Dorsolateral prefrontal cortex (tissue), 120 donors: ENCODE measurements at regions of chr15 and their contacts with region 1.

Region 1: GRCh38 chr15:40421246-40422157 is 15.9 kb downstream of the IVD start:
- DNase-seq: peak; percentile 67 to 89 (median 80)
- H3K4me3 ChIP-seq: peak overlapping the region in 21 of 59 donors; percentile 9 to 33 (median 20)
- H3K27ac ChIP-seq: peak overlapping the region in 25 of 59 donors; percentile 0 to 66 (median 33)
- H3K27me3 ChIP-seq: no peaks in the 10 kb centered on the region
- CTCF ChIP-seq: peak; percentile 56 to 99 (median 92)

Region 2: DNA sequence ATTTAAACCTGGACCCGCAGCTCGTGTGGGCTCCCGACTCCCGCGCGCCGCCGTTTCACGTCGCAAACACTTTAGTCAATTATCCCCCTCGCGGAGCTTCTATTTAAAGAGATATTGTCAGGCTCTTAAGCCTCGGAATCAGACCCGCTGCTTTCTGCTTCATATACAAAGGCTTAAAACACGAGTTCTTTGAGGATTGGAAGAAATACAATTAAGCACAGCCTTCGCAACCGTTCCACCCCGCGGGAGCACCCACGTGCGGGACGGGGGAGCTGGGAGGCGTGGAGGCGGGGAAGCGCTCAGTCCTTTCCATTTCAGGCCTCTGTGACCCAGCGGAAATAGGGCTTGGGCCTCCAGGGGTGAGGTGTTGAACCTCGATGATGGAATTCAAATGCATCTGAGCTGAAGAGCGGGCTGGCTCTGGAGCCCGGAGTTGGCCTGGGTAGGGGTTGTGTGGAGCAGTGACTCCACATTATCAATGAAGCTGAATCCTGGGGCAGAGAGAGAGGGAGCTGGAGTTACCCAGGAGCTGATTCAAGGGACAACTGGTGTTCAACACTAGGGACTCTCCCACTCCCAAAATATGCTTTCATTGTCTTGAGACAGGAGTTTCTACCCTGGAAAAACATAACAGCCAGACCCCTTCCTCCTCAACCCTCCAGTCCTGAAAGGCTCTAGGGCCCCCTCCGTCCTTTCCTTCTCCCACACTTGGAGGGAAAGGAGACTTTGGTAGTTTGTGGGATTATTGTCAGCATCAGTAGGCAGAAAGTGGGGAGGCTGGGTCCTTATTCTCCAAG is 141.0 kb before region 1 on chr15:
- intact Hi-C with region 1: loop called (anchors 1 to 5 kb)
- DNase-seq: no peak
- H3K4me3 ChIP-seq: peak overlapping the region in 29 of 59 donors; percentile 3 to 57 (median 38)
- H3K27ac ChIP-seq: no peak overlapping the region
- H3K27me3 ChIP-seq: peaks cover 0 to 57% (median 37%) of the 10 kb centered on the region in 45 donors
- CTCF ChIP-seq: no peak

Region 3: GRCh38 chr15:40344631-40345120 is 76.8 kb before region 1 on chr15:
- intact Hi-C with region 1: loop called (anchors 2 to 5 kb)
- DNase-seq: peak in 6 of 10 donors; percentile 40 to 89 (median 70)
- H3K4me3 ChIP-seq: peak overlapping the region in 3 of 59 donors; percentile 8 to 26 (median 9)
- H3K27ac ChIP-seq: peak overlapping the region in 3 of 59 donors; percentile 15 to 59 (median 45)
- H3K27me3 ChIP-seq: no peaks in the 10 kb centered on the region
- CTCF ChIP-seq: peak; percentile 56 to 90 (median 81)

Region 4: DNA sequence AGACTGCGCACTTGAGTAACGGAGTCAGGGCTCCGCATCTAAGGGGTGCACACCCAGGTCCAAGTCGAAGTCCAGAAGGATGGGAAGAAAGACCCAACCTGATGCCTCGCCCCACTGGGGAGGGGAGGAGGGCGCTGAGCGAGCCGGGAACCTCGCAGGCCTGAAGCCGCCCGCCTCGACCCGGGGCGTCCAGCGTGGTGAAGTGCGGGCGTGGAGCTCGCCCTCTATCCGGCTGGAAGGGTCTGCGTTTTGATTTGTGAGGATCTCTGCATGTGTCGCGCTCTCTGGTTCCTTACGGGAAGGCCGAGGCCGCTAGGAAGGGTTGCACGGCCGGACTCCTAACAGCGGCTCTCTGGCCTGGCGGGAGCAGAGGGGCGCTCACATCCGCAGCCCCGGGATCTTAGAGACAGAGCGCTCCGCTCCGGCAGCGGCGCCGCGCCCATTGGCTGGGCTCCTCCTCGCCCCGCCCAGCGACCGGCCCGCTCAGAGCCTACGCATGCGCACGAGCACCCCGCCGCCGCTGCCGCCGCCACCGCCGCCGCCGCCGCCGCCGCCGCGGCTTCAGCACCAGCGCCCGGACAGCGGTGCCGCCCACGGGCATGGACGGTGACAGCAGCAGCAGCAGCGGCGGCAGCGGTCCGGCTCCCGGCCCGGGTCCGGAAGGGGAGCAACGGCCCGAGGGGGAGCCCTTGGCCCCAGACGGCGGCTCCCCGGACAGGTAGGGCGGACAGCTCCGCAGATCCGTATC is 63.6 kb before region 1 on chr15 and contains the start of gene DISP2:
- intact Hi-C with region 1: loop called in 1 of 2 experiments (anchors 5 kb)
- DNase-seq: peak; percentile 70 to 93 (median 83)
- H3K4me3 ChIP-seq: peak within 1 kb of the TSS; percentile 50 to 83 (median 72)
- H3K27ac ChIP-seq: peak within 1 kb of the TSS in 54 of 59 donors; percentile 26 to 90 (median 74)
- H3K27me3 ChIP-seq: no peaks in the 10 kb centered on the region
- CTCF ChIP-seq: peak in 37 of 56 donors; percentile 2 to 61 (median 27)
- total RNA-seq, gene DISP2: 11.5 to 58.0 (median 37.6) TPM